ENCODE measurements at regions of chrX and their contacts with region 1.

Region 1: DNA sequence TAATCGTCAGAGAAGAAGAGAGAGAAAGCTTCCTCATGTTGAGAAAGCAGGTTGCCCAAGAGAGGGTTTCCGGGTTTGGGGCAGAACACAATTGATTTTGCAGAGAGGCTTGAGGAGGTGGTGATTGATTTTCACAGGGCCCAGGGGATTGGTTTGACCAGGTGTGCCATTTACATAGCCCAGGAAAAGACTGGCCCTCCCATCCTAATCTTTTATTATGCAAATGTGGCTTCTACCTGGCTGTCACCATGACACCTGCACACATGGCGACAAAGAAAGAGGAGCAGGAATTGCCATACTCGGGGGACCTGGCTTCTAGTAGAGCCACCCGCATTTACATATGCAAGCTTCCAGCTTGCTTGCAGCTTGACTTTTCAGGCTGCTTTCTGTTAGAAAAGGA is 405.3 kb downstream of the PPP4R3C start:
- DNase-seq: no peak
- ATAC-seq: no peak
- H3K4me3 ChIP-seq: no peak overlapping the region
- H3K27ac ChIP-seq: no peak overlapping the region
- H3K4me1 ChIP-seq: no peaks in the 10 kb centered on the region
- H3K27me3 ChIP-seq: no peaks in the 10 kb centered on the region
- CTCF ChIP-seq: no peak

Region 2: DNA sequence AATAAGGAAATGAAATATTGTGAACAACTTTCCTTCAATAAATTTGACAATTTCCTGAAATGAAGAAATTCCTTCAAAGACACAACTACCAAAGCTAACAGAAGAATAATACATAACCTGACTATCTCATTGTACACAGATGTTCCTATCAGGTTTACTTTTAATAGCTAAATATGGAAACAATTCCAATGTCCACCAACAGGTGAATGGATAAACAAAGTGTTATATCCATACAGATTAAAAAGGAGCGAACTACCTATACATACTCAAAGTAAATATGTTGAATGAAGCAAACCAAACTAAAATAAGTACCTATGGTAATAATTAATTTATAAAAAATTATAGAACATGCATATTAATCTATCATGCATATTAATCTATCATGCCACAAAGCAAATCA is 149.7 kb before region 1 on chrX:
- intact Hi-C with region 1: no loop called
- DNase-seq: no peak
- ATAC-seq: no peak
- H3K4me3 ChIP-seq: no peak overlapping the region
- H3K27ac ChIP-seq: no peak overlapping the region
- H3K4me1 ChIP-seq: no peaks in the 10 kb centered on the region
- H3K27me3 ChIP-seq: no peaks in the 10 kb centered on the region
- CTCF ChIP-seq: peak in 1 of 9 donors; percentile 6

Region 3: DNA sequence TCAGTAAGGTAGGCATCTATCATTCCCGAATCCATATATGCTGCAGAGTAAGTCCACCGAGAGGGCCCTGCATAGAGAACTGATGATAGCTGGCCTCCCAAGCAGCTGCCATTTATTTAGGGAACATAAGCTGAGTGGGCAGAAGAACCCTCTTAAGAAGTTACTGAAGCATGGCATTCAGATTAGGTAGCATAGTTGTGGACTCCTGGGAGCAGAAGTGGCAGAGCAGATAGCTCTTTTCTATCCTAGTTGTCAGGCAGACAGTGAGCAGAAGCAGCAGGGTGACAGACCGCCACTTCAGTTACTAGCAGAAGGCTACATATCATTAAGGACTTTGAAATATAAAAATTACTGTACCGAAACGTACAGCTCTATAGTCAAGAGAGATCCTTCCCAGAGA is 49.4 kb before region 1 on chrX:
- intact Hi-C with region 1: loop called in 1 of 10 experiments (anchors 10 kb)
- DNase-seq: no peak
- ATAC-seq: no peak
- H3K4me3 ChIP-seq: no peak overlapping the region
- H3K27ac ChIP-seq: no peak overlapping the region
- H3K4me1 ChIP-seq: no peaks in the 10 kb centered on the region
- H3K27me3 ChIP-seq: no peaks in the 10 kb centered on the region
- CTCF ChIP-seq: no peak